Psoas muscle (tissue), 8 donors: ENCODE measurements at regions of chrX and their contacts with region 1.

Region 1: GRCh38 chrX:71181910-71182799 is 37.5 kb downstream of the NLGN3 start:
- DNase-seq: peak; percentile 80 to 90
- ATAC-seq: peak; percentile 93 to 96 (median 96)
- H3K4me3 ChIP-seq: peak overlapping the region; percentile 67
- H3K27ac ChIP-seq: peak overlapping the region; percentile 89
- H3K4me1 ChIP-seq: no peaks in the 10 kb centered on the region
- H3K27me3 ChIP-seq: no peaks in the 10 kb centered on the region
- CTCF ChIP-seq: no peak

Region 2: GRCh38 chrX:70454441-70455365 is 727.5 kb before region 1 on chrX:
- intact Hi-C with region 1: loop called in 1 of 2 experiments (anchors 10 kb)
- DNase-seq: peak in 1 of 2 donors; percentile 47
- ATAC-seq: peak; percentile 50 to 76 (median 64)
- H3K4me3 ChIP-seq: peak overlapping the region; percentile 48
- H3K27ac ChIP-seq: no peak overlapping the region
- H3K4me1 ChIP-seq: no peaks in the 10 kb centered on the region
- H3K27me3 ChIP-seq: peaks cover 0 to 22% (median 0%) of the 10 kb centered on the region in 3 donors
- CTCF ChIP-seq: peak; percentile 54

Region 3: DNA sequence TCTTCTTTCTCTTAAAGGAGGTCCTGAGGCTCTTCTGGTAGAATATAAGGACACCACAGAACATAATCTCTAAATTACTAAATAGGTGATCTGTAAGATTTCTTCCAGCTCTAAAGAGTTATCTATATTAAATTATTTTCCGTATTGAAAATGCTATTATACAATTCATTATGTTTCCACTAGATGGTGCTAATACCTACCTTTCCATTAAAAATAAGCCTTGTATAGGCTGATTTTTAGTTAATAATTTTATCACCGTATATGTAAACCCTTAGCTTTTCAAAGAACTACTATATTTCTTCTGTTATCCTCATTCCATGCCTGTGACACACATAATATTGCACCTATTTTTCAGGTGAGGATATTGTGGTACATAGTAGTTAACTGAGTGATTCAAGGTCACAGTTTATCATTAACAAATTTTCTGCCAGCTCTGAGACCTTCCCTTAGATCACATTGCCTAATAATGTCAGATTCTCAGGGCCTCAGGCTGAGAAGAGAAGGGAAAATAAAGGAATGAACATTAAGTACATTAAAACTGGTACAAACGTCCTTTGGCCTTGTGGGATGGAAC is 412.4 kb before region 1 on chrX:
- intact Hi-C with region 1: loop called (anchors 5 kb)
- DNase-seq: no peak
- ATAC-seq: no peak
- H3K4me3 ChIP-seq: no peak overlapping the region
- H3K27ac ChIP-seq: no peak overlapping the region
- H3K4me1 ChIP-seq: no peaks in the 10 kb centered on the region
- H3K27me3 ChIP-seq: no peaks in the 10 kb centered on the region
- CTCF ChIP-seq: peak; percentile 60

Region 4: DNA sequence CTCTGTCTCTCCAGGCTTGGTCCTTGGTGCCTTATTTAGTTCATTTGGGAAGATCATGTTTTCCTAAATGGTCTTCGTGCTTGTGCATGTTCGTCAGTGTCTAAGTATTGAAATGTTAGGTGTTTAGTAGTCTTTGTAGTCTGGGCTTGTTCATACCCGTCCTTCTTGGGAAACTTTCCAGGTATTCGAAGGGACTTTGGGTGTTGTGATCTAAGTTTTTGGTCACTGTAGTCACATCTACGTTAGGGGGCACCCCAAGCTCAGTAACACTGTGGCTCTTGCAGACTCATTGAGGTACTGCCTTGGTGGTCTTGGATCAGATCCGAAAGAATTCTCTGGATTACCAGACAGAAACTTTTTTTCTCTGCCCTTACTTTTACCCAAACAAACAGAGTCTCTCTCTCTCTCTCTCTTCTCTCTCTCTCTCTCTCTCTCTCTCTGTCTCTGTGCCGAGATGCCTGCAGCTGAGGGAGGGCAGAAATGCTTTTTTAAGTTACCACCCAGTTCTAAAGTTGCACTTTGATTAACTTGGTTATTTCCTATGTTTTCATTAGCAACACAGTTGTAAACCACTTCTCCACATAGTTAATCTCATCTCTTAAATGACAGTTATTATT is 183.6 kb before region 1 on chrX:
- intact Hi-C with region 1: loop called in 1 of 2 experiments (anchors 10 kb)
- DNase-seq: no peak
- ATAC-seq: no peak
- H3K4me3 ChIP-seq: no peak overlapping the region
- H3K27ac ChIP-seq: no peak overlapping the region
- H3K4me1 ChIP-seq: no peaks in the 10 kb centered on the region
- H3K27me3 ChIP-seq: no peaks in the 10 kb centered on the region
- CTCF ChIP-seq: no peak

Region 5: DNA sequence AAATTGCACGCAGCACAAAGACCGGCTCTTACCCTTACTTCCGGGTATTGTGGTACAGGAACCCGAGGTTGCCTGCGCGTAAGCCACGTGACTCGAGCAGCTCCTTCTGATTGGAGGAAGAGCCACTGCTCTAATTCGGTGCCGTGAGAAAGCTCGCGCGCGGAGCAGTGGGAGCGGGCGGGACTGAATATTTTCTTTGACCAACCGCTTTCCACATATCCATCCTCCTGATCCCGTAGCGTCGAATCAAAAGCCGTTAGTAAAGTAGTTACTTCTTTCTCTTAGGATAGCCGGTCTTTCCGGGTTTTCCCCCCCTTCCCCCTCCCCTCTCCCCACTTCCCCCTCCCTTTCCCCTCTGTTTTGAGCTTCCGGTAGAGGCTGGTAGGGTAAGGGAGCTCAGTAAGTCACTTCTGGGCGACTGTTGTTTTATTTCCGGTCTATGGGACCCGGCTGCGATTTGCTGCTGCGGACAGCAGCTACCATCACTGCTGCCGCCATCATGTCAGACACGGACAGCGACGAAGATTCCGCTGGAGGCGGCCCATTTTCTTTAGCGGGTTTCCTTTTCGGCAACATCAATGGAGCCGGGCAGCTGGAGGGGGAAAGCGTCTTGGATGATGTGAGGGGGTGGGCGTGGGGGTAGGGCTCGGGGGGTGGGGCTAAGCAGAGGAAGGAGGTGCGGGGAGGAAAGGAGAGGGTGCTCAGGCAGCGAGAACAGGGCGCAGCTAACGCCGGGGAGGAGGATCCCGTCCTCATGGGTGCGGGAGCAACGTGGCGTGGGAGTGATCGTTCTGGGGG is 183.9 kb after region 1 on chrX and contains the start of gene TAF1:
- intact Hi-C with region 1: loop called in 1 of 2 experiments (anchors 10 kb)
- DNase-seq: peak; percentile 92 to 96
- ATAC-seq: peak; percentile 92 to 95 (median 94)
- H3K4me3 ChIP-seq: peak within 1 kb of the TSS; percentile 81
- H3K27ac ChIP-seq: peak within 1 kb of the TSS; percentile 92
- H3K4me1 ChIP-seq: peaks cover 8% of the 10 kb centered on the region
- H3K27me3 ChIP-seq: no peaks in the 10 kb centered on the region
- CTCF ChIP-seq: no peak
- total RNA-seq, gene TAF1: 22.3 to 25.6 (median 24.4) TPM

Region 6: DNA sequence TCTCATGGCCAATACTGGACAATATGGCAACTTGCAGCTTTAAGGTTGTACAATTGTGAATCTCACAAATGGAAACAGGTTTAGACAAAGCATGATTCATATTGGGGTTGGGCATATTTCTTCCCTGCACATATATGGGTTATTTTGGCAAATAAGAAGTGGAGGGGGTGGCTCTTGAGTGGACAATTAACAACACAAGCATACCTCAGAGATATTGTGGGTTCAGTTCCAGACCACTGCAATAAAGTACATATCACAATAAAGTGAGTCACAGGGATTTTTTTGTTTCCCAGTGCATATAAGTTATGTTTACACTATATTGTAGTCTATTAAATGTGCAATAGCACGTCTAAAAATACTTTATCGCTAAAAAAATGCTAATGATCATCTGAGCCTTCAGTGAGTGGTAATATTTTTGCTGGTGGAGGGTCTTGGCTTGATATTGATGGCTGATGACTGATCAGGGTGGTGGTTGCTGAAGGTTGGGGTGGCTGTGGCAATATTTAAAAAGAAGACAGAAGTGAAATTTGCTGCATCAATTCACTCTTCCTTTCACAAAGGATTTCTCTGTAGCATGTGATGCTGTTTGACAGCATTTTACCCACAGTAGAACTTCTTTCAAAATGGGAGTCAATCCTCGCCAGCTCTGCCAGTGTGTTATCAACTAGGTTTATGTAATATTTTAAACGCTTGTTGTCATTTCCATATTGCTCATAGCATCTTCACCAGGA is 300.2 kb after region 1 on chrX:
- intact Hi-C with region 1: no loop called
- DNase-seq: no peak
- ATAC-seq: no peak
- H3K4me3 ChIP-seq: no peak overlapping the region
- H3K27ac ChIP-seq: no peak overlapping the region
- H3K4me1 ChIP-seq: no peaks in the 10 kb centered on the region
- H3K27me3 ChIP-seq: no peaks in the 10 kb centered on the region
- CTCF ChIP-seq: no peak